GM10248 (cell line): ENCODE measurements at regions of chr5 and their contacts with region 1.

Region 1: GRCh38 chr5:73591102-73591695 is 25.7 kb downstream of the UTP15 start:
- DNase-seq: peak; percentile 52
- CTCF ChIP-seq: peak; percentile 81

Region 2: DNA sequence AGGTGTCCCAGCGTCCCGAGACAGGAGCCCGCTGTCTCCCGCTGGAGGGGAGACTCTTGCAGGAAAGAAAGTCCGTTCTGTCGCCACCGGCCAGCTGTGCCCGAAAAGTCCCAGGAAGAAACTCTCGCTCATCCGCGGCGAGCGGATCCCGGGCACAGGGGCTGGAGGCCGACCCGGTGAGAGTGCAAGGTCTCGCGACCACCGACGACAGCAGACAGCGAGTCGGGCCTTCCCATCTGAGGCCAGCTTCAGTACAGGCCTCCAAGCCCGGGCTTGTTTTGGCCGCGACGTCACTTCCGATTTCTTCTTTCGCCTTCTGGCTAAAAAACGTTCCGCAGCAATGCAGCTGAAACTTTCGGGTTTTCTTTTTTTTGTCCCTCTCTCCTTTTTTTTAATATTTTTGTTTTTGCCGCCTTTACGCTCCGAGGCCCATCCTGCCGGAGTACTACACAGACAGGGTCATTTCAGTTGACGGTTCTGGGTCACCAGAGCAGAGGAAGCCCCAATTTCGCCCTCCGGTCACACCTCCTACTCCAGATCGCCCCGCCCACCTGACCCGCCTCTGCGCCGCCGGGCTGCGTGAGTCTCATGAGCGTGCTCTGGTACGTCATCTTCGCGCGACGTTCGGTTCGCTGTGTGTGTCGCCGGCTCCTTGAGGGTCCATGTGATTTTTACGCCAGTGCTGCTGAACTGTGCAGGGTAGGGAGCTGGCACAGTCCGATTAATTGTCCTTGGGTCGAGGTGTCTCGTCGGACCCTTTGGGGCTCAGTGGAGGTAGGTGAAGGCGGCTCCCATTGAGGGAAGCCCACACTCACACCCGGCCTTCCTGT is 25.8 kb before region 1 on chr5 and contains the starts of genes ANKRA2 and UTP15:
- CTCF ChIA-PET with region 1: interaction called, 10 read pairs
- POLR2A ChIA-PET with region 1: no interaction called
- DNase-seq: peak; percentile 92
- CTCF ChIP-seq: no peak

Region 3: GRCh38 chr5:73617510-73618279 is 26.5 kb after region 1 on chr5:
- CTCF ChIA-PET with region 1: interaction called, 14 read pairs
- POLR2A ChIA-PET with region 1: no interaction called
- DNase-seq: peak; percentile 21
- CTCF ChIP-seq: no peak

Region 4: DNA sequence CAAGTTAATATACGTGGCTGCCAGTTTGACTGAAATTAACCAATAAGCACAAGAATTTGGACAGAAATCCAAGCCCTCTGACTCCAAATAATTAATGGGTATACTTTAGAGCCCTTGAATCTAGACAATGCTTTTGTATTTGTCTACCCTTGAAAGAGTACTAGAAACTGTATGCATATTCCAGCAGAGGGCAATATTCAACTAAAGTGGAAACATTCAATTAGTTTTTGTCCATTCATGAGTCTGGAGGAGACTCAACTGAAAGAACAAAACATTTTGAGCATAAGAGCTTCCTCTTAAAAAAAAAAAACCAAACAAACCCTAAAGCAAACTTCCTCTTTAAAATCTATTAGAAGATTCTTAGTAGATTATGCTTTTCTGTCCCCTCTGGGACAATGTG is 192.6 kb after region 1 on chr5:
- CTCF ChIA-PET with region 1: interaction called, 341 read pairs
- POLR2A ChIA-PET with region 1: no interaction called
- DNase-seq: no peak
- CTCF ChIP-seq: no peak

Region 5: DNA sequence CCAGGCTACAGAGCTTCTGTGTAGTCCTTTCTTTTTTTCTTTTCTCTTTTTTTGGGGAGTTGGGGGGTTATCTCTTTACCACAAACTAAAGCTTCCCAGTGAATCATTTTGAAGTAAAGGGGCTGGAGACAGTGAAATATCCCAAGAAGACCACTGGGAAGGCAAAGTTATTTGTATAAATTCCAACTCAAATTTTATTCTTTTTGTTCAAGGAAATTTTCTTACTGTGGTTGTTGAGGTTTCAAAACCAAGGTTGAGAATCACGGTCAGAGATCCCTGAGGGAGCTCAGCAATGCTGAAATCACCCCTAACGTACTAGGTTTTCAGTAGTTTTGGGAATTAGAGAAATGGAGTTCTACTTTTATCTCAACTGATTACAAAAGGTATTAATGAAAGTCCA is 210.5 kb after region 1 on chr5:
- CTCF ChIA-PET with region 1: interaction called, 341 read pairs
- POLR2A ChIA-PET with region 1: no interaction called
- DNase-seq: no peak
- CTCF ChIP-seq: no peak